ENCODE measurements at regions of chr3 and their contacts with region 1.

Region 1: GRCh38 chr3:45760878-45761711 is 35.2 kb downstream of the SLC6A20 start:
- DNase-seq: peak; percentile 3
- H3K4me3 ChIP-seq: no peak overlapping the region
- H3K27me3 ChIP-seq: peaks cover 9% of the 10 kb centered on the region
- CTCF ChIP-seq: peak; percentile 88

Region 2: DNA sequence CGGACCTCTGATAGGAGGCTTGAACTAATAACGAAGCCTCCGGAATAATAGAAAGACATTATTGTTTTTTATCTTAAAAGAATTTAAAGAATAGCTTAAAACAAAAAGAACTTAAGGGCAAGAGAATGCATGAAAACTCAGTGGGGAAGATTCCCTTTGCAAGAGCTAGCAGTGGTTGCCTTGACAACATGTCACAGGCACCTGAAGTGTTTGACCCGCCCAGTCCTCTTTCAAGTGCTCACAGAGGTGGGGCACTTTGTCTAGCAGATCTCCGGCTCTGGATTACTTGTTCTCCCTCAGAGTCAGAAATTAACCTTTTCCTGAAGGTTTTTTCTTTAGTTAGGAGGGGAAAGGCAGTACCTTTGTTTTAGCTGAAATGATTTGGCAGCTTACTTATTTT is 334.9 kb before region 1 on chr3:
- CTCF ChIA-PET with region 1: no interaction called
- POLR2A ChIA-PET with region 1: no interaction called
- DNase-seq: no peak
- H3K4me3 ChIP-seq: no peak overlapping the region
- H3K27me3 ChIP-seq: no peaks in the 10 kb centered on the region
- CTCF ChIP-seq: no peak

Region 3: GRCh38 chr3:45546716-45547701 is 214.1 kb before region 1 on chr3:
- CTCF ChIA-PET with region 1: no interaction called
- POLR2A ChIA-PET with region 1: interaction called, 12 read pairs
- DNase-seq: no peak
- H3K4me3 ChIP-seq: no peak overlapping the region
- H3K27me3 ChIP-seq: no peaks in the 10 kb centered on the region
- CTCF ChIP-seq: peak; percentile 38

Region 4: GRCh38 chr3:45730409-45731154 is 30.5 kb before region 1 on chr3:
- CTCF ChIA-PET with region 1: no interaction called
- POLR2A ChIA-PET with region 1: no interaction called
- DNase-seq: no peak
- H3K4me3 ChIP-seq: no peak overlapping the region
- H3K27me3 ChIP-seq: no peaks in the 10 kb centered on the region
- CTCF ChIP-seq: no peak

Region 5: DNA sequence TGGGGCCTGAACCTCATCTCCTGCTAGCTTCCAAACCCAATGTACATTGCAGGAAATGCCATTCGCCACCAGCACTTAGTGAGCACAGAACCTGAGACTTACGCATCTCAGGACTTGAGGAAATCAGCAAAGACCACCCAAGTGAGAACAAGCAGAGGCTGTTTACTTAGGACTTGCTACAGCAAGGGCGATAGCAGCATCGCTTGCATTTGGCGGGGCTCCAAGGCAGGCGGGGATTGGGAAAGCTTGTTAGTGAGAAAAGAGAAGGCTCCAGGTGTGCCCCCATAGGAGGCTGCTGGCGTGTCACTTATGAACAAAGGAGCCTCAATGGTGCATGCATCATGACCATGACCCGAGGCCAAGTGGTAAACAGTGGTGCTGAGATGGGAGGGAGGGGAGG is 15.5 kb after region 1 on chr3:
- CTCF ChIA-PET with region 1: interaction called, 24 read pairs
- POLR2A ChIA-PET with region 1: no interaction called
- DNase-seq: no peak
- H3K4me3 ChIP-seq: no peak overlapping the region
- H3K27me3 ChIP-seq: peaks cover 15% of the 10 kb centered on the region
- CTCF ChIP-seq: no peak

Region 6: GRCh38 chr3:45832691-45833090 is 71.6 kb after region 1 on chr3:
- CTCF ChIA-PET with region 1: interaction called, 24 read pairs
- POLR2A ChIA-PET with region 1: no interaction called
- DNase-seq: no peak
- H3K4me3 ChIP-seq: no peak overlapping the region
- H3K27me3 ChIP-seq: no peaks in the 10 kb centered on the region
- CTCF ChIP-seq: peak; percentile 33

Region 7: DNA sequence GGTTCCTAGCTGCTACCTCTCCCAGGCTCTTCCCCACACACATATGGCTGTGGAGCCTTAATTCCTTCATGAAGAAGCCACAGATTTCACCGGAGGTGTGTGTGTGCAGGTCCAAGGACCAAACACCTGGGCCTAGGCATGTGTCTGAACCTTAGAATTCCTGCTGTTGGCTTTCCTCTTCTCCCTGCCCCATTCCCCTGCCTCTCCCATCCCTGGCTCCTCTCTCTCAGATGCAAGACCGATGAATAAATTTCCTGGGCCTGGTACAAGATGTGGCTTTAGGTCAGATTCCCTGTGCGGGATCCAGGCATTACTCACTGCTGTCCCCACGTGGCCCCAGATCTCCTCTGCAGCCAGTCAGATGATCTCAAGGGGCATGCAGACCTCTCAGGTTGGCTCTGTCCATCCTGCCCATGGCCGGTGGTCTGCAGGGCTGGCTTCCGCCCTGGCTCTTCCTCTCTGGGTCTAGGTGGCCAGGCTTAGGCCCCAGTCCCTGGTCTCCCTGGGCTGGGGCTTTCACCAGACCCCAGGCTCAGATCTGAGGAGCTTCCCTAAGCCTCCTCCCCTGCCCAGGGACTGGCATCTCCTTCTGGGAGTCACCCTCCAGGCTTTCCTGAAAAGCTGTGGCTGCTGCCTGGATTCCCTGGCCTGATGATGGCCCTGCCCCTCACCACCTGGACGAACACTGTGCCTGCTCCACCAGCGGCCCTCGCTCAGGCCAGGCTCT is 145.7 kb after region 1 on chr3:
- CTCF ChIA-PET with region 1: interaction called, 43 read pairs
- POLR2A ChIA-PET with region 1: no interaction called
- DNase-seq: no peak
- H3K4me3 ChIP-seq: no peak overlapping the region
- H3K27me3 ChIP-seq: peaks cover 3% of the 10 kb centered on the region; the same call in 1 of the 2 replicates
- CTCF ChIP-seq: peak; percentile 74

Region 8: GRCh38 chr3:45929042-45929679 is 168.1 kb after region 1 on chr3:
- CTCF ChIA-PET with region 1: interaction called, 92 read pairs
- POLR2A ChIA-PET with region 1: no interaction called
- DNase-seq: no peak
- H3K4me3 ChIP-seq: no peak overlapping the region
- H3K27me3 ChIP-seq: no peaks in the 10 kb centered on the region
- CTCF ChIP-seq: peak; percentile 87